ENCODE measurements at regions of chr7 and their contacts with region 1.

Region 1: GRCh38 chr7:126119981-126120380 is 1132.8 kb downstream of the GRM8 start:
- DNase-seq: peak; percentile 74
- H3K4me3 ChIP-seq: no peak overlapping the region
- H3K27ac ChIP-seq: peak overlapping the region; percentile 94
- H3K4me1 ChIP-seq: peaks cover 24% of the 10 kb centered on the region
- H3K27me3 ChIP-seq: no peaks in the 10 kb centered on the region
- CTCF ChIP-seq: no peak

Region 2: DNA sequence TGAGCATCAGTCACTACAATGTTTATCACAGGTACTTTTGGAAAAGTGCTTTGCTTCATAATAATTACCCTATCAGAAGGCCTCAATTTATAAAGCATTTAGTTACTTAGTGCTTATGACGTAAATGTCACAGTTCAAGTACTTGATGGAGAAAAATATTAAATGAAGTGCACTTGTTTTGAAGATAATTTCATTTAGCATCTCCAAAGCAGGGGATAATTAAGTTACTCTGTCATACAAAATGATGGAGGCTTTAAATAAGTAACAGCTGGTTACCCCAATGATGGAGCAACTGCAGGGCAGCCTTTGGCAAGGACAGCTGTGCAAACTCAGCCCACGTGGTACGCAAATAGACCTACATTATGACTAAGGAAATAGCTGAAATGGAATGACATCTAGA is 364.0 kb after region 1 on chr7:
- CTCF ChIA-PET with region 1: no interaction called
- POLR2A ChIA-PET with region 1: no interaction called
- intact Hi-C with region 1: loop called (anchors 5 kb)
- DNase-seq: peak; percentile 81
- H3K4me3 ChIP-seq: no peak overlapping the region
- H3K27ac ChIP-seq: peak overlapping the region; percentile 36
- H3K4me1 ChIP-seq: peaks cover 17% of the 10 kb centered on the region
- H3K27me3 ChIP-seq: no peaks in the 10 kb centered on the region
- CTCF ChIP-seq: no peak

Region 3: GRCh38 chr7:126698446-126698845 is 578.5 kb after region 1 on chr7:
- CTCF ChIA-PET with region 1: no interaction called
- POLR2A ChIA-PET with region 1: no interaction called
- intact Hi-C with region 1: loop called (anchors 1 kb)
- DNase-seq: no peak
- H3K4me3 ChIP-seq: no peak overlapping the region
- H3K27ac ChIP-seq: no peak overlapping the region
- H3K4me1 ChIP-seq: peaks cover 44% of the 10 kb centered on the region
- H3K27me3 ChIP-seq: no peaks in the 10 kb centered on the region
- CTCF ChIP-seq: no peak

Measured in A673 (cell line).